Psoas muscle (tissue), 8 donors: ENCODE measurements at regions of chr2 and their contacts with region 1.

Region 1: GRCh38 chr2:190456833-190457232 is 48.7 kb downstream of the MFSD6 start:
- DNase-seq: no peak
- ATAC-seq: no peak
- H3K4me3 ChIP-seq: no peak overlapping the region
- H3K27ac ChIP-seq: no peak overlapping the region
- H3K4me1 ChIP-seq: no peaks in the 10 kb centered on the region
- H3K27me3 ChIP-seq: no peaks in the 10 kb centered on the region
- CTCF ChIP-seq: no peak

Region 2: DNA sequence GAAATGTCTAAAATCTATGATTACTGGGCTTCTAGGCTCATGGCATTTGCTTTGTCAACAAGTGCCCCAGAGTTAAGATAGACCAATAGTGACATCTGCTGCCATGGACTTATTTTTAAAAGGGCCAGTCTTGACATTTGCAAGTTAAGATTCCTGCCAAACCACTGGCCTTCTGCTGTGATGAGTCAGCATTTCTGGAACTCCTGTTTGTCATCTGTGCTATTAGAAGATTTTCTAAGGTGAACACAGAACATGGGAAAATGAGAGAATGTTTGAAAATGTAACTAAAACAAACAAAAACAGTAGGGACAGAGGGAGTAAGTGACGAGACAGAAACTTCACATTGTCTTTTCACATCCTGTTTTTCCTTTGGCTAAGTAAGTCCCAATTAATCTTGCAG is 1109.3 kb before region 1 on chr2:
- intact Hi-C with region 1: no loop called
- DNase-seq: no peak
- ATAC-seq: peak; percentile 87 to 95 (median 93)
- H3K4me3 ChIP-seq: no peak overlapping the region
- H3K27ac ChIP-seq: peak overlapping the region; percentile 60
- H3K4me1 ChIP-seq: peaks cover 8% of the 10 kb centered on the region
- H3K27me3 ChIP-seq: no peaks in the 10 kb centered on the region
- CTCF ChIP-seq: peak; percentile 39

Region 3: DNA sequence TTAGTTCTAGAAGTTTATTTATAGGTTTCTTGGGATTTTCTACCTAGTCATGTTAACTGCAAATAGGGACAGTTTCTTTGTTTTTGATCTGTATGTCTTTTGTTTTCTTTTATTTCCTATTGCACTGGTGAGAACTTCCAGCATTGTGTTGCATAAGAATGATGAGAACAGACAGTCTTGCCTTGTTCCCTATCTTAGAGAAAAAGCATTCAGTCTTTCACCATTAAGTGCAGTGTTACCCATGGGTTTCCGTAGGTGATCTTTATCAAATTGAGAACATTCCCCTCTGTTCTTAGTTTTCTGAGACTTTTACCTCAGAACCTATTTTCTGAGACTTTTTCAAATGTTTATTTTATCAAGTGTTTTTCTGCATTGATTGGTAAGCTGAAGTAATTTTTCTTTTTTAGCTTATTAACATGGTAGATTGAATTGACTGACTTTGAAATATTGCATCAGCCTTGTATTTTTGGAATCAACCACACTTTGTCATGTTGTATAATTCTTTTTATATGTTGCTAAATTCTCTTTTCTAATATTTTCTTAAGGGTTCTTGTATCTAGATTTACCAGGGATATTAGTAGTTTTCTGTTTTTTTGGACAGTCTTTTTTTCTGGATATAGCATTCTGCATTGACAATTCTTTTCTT is 31.5 kb before region 1 on chr2:
- intact Hi-C with region 1: loop called in 1 of 2 experiments (anchors 2 kb)
- DNase-seq: no peak
- ATAC-seq: no peak
- H3K4me3 ChIP-seq: no peak overlapping the region
- H3K27ac ChIP-seq: no peak overlapping the region
- H3K4me1 ChIP-seq: no peaks in the 10 kb centered on the region
- H3K27me3 ChIP-seq: no peaks in the 10 kb centered on the region
- CTCF ChIP-seq: no peak

Region 4: DNA sequence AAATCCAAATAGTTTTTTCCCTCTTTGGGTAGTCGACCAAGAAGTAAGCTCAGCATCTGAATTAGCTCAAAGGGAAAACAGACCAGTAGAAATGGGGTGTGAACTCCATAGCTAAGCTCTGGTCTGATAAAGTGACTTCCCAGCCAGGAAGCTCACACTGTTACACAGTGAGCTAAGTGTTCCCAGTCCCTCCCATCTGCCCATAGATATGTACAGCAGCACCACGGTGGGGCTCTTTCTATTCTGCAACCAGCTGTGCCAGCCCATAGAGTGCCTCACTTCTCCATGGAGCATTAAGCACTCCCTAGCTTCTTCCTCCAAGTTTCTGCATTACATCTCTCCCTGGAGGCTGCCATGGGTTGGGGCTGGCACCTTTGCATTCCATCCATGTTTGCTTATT is 105.3 kb after region 1 on chr2:
- intact Hi-C with region 1: no loop called
- DNase-seq: no peak
- ATAC-seq: no peak
- H3K4me3 ChIP-seq: no peak overlapping the region
- H3K27ac ChIP-seq: no peak overlapping the region
- H3K4me1 ChIP-seq: no peaks in the 10 kb centered on the region
- H3K27me3 ChIP-seq: no peaks in the 10 kb centered on the region
- CTCF ChIP-seq: no peak